GM12878 (cell line): ENCODE measurements at regions of chr1 and their contacts with region 1.

Region 1: DNA sequence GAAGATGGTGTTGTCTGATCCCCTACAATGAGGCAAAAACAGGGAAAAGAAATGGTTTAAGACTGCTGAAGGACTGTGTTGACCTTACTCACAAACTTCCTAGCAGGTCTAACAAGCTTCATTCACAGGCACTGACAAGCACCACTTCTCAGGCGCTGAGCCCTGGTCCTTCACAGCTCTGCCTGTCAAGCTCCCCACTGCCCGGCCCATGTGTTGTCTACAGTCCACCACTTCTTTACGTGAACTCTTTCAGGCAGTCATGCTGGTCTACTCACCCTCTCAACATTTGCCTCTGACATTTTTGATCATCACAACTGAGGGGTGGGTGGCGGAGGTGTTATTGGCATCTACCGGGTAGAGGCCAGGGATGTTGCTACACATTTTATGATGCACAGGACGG is 40.7 kb upstream of the MYBPHL start:
- DNase-seq: no peak
- ATAC-seq: no peak
- H3K4me3 ChIP-seq: no peak overlapping the region
- H3K27ac ChIP-seq: no peak overlapping the region
- H3K4me1 ChIP-seq: no peaks in the 10 kb centered on the region
- H3K27me3 ChIP-seq: peaks cover 0 to 2% of the 10 kb centered on the region in 2 experiments; a peak in 1 of 4 replicates
- CTCF ChIP-seq: no peak
- EP300 ChIP-seq: no peak
- POLR2A ChIP-seq: no peak
- RAD21 ChIP-seq: no peak

Region 2: GRCh38 chr1:109191377-109191776 is 156.1 kb before region 1 on chr1:
- CTCF ChIA-PET with region 1: no interaction called
- POLR2A ChIA-PET with region 1: no interaction called
- RAD21 ChIA-PET with region 1: no interaction called
- SMC1A ChIA-PET with region 1: no interaction called
- in situ Hi-C with region 1: no loop called
- intact Hi-C with region 1: no loop called
- DNase-seq: no peak
- ATAC-seq: peak; percentile 88
- H3K4me3 ChIP-seq: no peak overlapping the region
- H3K27ac ChIP-seq: no peak overlapping the region
- H3K4me1 ChIP-seq: no peaks in the 10 kb centered on the region; the same call in 1 of the 2 replicates
- H3K27me3 ChIP-seq: no peaks in the 10 kb centered on the region; a peak in 1 of 4 replicates
- CTCF ChIP-seq: peak; percentile 21 to 62 (median 29); a peak in 5 of 6 replicates
- EP300 ChIP-seq: no peak
- POLR2A ChIP-seq: no peak
- RAD21 ChIP-seq: no peak

Region 3: GRCh38 chr1:109592916-109593315 is 245.4 kb after region 1 on chr1:
- CTCF ChIA-PET with region 1: no interaction called
- POLR2A ChIA-PET with region 1: no interaction called
- RAD21 ChIA-PET with region 1: no interaction called
- SMC1A ChIA-PET with region 1: no interaction called
- in situ Hi-C with region 1: no loop called
- intact Hi-C with region 1: loop called (anchors 5 kb)
- DNase-seq: no peak
- ATAC-seq: no peak
- H3K4me3 ChIP-seq: no peak overlapping the region
- H3K27ac ChIP-seq: no peak overlapping the region
- H3K4me1 ChIP-seq: no peaks in the 10 kb centered on the region
- H3K27me3 ChIP-seq: no peaks in the 10 kb centered on the region
- CTCF ChIP-seq: no peak
- EP300 ChIP-seq: no peak
- POLR2A ChIP-seq: no peak
- RAD21 ChIP-seq: no peak